ENCODE measurements at regions of chr3 and their contacts with region 1.

Region 1: GRCh38 chr3:112013058-112013783 is 14.5 kb downstream of the TAGLN3 start:
- DNase-seq: peak; percentile 57 to 77
- H3K4me3 ChIP-seq: peak overlapping the region in 1 of 2 donors; percentile 33
- H3K27ac ChIP-seq: peak overlapping the region; percentile 44 to 54
- H3K4me1 ChIP-seq: peaks cover 0 to 26% (median 7%) of the 10 kb centered on the region in 4 donors
- H3K27me3 ChIP-seq: no peaks in the 10 kb centered on the region
- CTCF ChIP-seq: peak; percentile 69 to 72

Region 2: DNA sequence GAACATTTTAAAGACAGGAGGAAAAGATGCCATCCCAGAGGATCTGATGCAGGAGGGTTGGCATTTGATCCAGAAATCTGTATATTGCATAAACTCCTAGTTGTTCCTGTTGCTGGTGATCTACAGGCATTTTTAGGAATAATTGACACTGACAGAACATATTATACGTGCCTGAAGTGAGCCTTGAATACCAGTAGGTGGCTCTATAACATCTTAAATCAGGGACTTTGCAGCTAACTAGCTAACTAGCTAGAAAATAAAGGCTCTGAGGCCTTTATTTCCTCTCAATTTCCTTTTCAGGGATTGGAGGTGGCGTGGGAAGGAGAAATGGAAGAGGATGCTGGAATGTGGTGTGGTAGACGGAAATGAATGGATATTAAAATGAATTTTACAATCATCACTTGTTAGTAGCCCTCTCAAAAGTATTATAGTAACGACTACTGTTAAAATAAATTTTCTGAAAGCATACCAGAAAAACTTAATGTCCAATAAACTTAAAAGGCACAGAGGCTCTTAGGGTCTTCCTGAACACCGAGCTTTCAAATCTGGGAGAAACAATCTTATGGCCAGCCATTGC is 344.2 kb before region 1 on chr3:
- intact Hi-C with region 1: loop called (anchors 5 kb)
- DNase-seq: no peak
- H3K4me3 ChIP-seq: no peak overlapping the region
- H3K27ac ChIP-seq: peak overlapping the region in 1 of 2 donors; percentile 0
- H3K4me1 ChIP-seq: peaks cover 0 to 3% (median 0%) of the 10 kb centered on the region in 4 donors
- H3K27me3 ChIP-seq: no peaks in the 10 kb centered on the region
- CTCF ChIP-seq: peak; percentile 77 to 85

Region 3: GRCh38 chr3:111717601-111718000 is 295.6 kb before region 1 on chr3:
- intact Hi-C with region 1: loop called (anchors 1 kb)
- DNase-seq: peak; percentile 82 to 86
- H3K4me3 ChIP-seq: no peak overlapping the region
- H3K27ac ChIP-seq: peak overlapping the region; percentile 7 to 35
- H3K4me1 ChIP-seq: peaks cover 0 to 28% (median 10%) of the 10 kb centered on the region in 4 donors
- H3K27me3 ChIP-seq: no peaks in the 10 kb centered on the region
- CTCF ChIP-seq: peak; percentile 88 to 95

Measured in tibial artery (tissue), 4 donors.